ENCODE measurements at regions of chr1 and their contacts with region 1.

Region 1: GRCh38 chr1:40153073-40153770 is 8.0 kb upstream of the RLF start:
- DNase-seq: peak; percentile 51
- H3K4me3 Mint-ChIP-seq: no peak overlapping the region
- H3K27ac Mint-ChIP-seq: peak overlapping the region; percentile 10
- H3K4me1 Mint-ChIP-seq: peaks cover 7% of the 10 kb centered on the region
- H3K27me3 Mint-ChIP-seq: peaks cover 2% of the 10 kb centered on the region

Region 2: GRCh38 chr1:38291906-38292521 is 1861.2 kb before region 1 on chr1:
- CTCF ChIA-PET with region 1: no interaction called
- intact Hi-C with region 1: no loop called
- DNase-seq: no peak
- H3K4me3 Mint-ChIP-seq: no peak overlapping the region
- H3K27ac Mint-ChIP-seq: no peak overlapping the region
- H3K4me1 Mint-ChIP-seq: peaks cover 2% of the 10 kb centered on the region
- H3K27me3 Mint-ChIP-seq: peaks cover 36% of the 10 kb centered on the region

Region 3: DNA sequence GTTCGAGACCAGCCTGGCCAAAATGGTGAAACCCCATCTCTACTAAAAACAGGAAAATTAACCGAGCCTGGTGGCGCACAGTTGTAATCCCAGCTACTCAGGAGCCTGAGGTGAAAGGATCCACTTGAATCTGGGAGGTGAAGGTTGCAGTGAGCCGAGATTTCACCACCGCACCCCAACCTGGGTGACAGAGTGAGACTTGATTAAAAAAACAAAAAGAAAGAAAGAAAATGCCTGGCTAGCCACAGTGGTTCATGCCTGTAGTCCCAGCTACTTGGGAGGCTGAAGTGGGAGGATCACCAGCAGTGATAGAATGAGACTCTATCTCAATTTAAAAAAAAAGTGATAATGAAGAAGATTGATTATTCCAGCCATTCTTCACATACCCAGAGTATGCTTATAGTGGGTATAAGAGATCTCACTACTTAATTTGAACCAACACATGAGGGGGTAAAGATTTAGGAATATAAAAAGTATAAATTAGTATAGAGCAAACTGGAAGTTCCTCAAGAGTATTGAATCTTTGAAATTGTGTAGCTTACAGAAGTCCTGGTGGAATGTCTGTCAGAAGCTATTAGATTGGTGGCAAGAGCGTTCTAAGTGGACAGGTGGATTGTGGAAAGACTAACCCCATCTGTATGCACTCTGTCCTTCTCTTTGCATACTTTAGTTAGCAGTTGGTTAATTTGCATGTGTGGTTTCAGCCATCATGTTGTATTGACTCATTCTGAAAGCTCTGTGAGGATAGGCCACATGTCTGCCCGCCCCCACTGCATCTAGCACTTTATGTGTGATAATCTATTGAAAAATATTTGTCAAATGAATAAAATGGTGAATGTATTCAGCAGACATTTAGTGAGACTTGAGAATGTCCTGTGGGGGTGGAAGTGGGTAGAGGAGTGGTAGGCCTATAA is 33.0 kb after region 1 on chr1:
- CTCF ChIA-PET with region 1: interaction called, 24 read pairs
- intact Hi-C with region 1: no loop called
- DNase-seq: peak; percentile 69
- H3K4me3 Mint-ChIP-seq: no peak overlapping the region
- H3K27ac Mint-ChIP-seq: no peak overlapping the region
- H3K4me1 Mint-ChIP-seq: peaks cover 42% of the 10 kb centered on the region
- H3K27me3 Mint-ChIP-seq: no peaks in the 10 kb centered on the region

Region 4: GRCh38 chr1:40224040-40224439 is 70.8 kb after region 1 on chr1:
- CTCF ChIA-PET with region 1: no interaction called
- intact Hi-C with region 1: no loop called
- DNase-seq: peak; percentile 42
- H3K4me3 Mint-ChIP-seq: no peak overlapping the region
- H3K27ac Mint-ChIP-seq: no peak overlapping the region
- H3K4me1 Mint-ChIP-seq: peaks cover 15% of the 10 kb centered on the region
- H3K27me3 Mint-ChIP-seq: no peaks in the 10 kb centered on the region

Region 5: DNA sequence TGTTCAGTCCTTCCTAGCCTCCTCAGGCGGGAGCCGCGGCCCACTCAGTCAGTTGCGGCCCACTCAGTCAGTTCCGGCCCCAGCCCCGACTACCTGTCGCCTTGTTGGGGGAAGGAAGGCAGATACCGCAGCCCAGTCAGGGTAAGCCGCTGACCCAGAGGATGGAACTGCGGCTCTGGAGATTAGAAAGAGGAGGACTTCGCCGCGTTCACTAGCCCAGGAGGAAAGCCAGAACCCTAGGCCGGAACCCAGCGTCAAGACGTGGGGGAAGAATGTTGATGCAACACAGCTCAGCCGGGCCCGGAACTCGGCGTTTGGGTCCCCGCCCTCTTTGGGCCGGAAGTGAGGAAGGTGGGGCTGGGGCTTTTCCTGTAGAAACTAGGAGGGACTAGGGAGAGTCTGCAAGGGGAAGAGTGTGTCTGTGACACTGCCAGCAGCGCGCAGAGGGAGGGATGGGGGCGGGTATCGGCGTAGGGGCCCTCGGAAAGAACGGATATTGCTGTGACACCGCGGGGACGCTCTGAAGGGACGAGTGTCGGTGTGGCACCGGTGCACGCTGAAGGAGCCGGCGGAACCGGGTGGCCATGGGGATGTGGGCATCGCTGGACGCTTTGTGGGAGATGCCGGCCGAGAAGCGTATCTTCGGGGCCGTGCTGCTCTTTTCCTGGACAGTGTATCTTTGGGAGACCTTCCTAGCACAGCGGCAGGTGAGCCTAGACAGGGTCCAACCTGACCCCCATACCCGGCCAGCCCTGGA is 104.6 kb after region 1 on chr1 and contains the start of gene ZMPSTE24:
- CTCF ChIA-PET with region 1: interaction called, 15 read pairs
- intact Hi-C with region 1: no loop called
- DNase-seq: peak; percentile 98
- H3K4me3 Mint-ChIP-seq: peak within 1 kb of the TSS; percentile 99
- H3K27ac Mint-ChIP-seq: peak within 1 kb of the TSS; percentile 100
- H3K4me1 Mint-ChIP-seq: peaks cover 35% of the 10 kb centered on the region
- H3K27me3 Mint-ChIP-seq: no peaks in the 10 kb centered on the region
- total RNA-seq, gene ZMPSTE24: 13.2 to 14.7 TPM

Region 6: DNA sequence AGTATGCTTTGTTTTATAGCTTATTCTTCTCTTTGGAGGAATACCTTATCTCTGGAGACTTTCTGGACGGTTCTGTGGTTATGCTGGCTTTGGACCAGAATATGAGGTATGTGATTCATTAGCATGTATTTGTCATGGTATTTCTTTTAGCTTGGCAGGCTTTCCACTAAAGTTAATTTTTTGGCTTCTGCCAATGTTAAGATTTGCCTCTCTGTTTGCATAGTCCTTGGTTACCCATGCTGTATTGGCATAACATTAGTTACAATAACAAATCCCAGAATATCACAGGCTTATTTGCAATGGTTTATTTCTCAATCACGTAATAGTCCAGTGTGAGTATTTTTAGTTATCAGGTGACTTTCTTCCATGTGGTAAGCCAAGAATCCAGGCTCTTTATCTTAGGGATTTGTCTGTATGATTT is 114.6 kb after region 1 on chr1:
- CTCF ChIA-PET with region 1: interaction called, 13 read pairs
- intact Hi-C with region 1: no loop called
- DNase-seq: no peak
- H3K4me3 Mint-ChIP-seq: no peak overlapping the region
- H3K27ac Mint-ChIP-seq: no peak overlapping the region
- H3K4me1 Mint-ChIP-seq: peaks cover 53% of the 10 kb centered on the region
- H3K27me3 Mint-ChIP-seq: no peaks in the 10 kb centered on the region

Region 7: DNA sequence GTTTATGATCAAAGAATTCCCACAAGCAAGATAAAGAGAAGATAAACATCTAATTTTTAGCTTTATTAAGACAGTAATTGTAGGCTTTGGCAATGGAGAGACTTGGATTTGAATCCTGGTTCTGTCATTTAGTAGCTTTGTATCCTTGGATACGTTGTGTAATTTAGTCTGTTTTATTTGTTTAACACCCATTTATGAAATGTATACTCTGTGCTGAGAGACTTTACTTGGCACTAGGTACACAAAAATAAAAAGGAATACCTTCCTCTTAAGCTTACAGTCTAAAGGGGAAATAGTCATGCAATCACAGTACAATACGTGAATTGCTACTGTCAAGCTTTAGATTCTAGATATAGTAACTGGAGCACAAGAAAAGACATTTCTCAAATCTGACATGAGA is 128.6 kb after region 1 on chr1:
- CTCF ChIA-PET with region 1: interaction called, 18 read pairs
- intact Hi-C with region 1: no loop called
- DNase-seq: no peak
- H3K4me3 Mint-ChIP-seq: no peak overlapping the region
- H3K27ac Mint-ChIP-seq: no peak overlapping the region
- H3K4me1 Mint-ChIP-seq: no peaks in the 10 kb centered on the region
- H3K27me3 Mint-ChIP-seq: no peaks in the 10 kb centered on the region

Region 8: DNA sequence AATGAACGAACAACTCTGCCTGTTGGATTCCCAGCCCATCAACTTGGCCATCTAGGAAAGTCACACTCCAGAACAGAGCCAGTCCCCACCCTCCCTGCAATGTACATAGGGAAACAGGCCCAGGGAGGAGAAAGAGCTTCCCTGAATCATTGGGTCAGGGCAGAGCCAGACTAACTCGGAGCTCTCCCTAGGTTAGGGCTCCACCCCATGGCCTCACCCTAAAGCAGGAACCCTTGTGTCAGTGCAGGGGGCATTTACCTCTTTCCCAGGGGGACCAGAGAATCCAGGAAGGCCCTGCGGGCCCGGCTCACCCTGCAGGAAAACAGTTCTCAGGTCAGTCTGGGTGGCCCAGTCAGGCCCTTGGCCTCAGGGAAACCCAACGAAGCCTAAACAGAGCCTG is 152.2 kb after region 1 on chr1:
- CTCF ChIA-PET with region 1: interaction called, 10 read pairs
- intact Hi-C with region 1: loop called (anchors 1 kb)
- DNase-seq: peak; percentile 50
- H3K4me3 Mint-ChIP-seq: no peak overlapping the region
- H3K27ac Mint-ChIP-seq: no peak overlapping the region
- H3K4me1 Mint-ChIP-seq: no peaks in the 10 kb centered on the region
- H3K27me3 Mint-ChIP-seq: no peaks in the 10 kb centered on the region

Region 9: GRCh38 chr1:40404670-40405462 is 251.6 kb after region 1 on chr1:
- CTCF ChIA-PET with region 1: interaction called, 11 read pairs
- intact Hi-C with region 1: loop called (anchors 1 kb)
- DNase-seq: peak; percentile 62
- H3K4me3 Mint-ChIP-seq: peak overlapping the region; percentile 41
- H3K27ac Mint-ChIP-seq: peak overlapping the region; percentile 94
- H3K4me1 Mint-ChIP-seq: peaks cover 71% of the 10 kb centered on the region
- H3K27me3 Mint-ChIP-seq: no peaks in the 10 kb centered on the region

Measured in activated naive CD4-positive, alpha-beta T cell treated with anti-CD3 and anti-CD28 coated beads for 36 hours (primary cell).